ENCODE measurements at regions of chr19 and their contacts with region 1.

Region 1: GRCh38 chr19:11137542-11138384 is 17.8 kb downstream of the SPC24 start:
- DNase-seq: peak; percentile 95
- H3K4me3 Mint-ChIP-seq: peak overlapping the region; percentile 66
- H3K27ac Mint-ChIP-seq: peak overlapping the region; percentile 89
- H3K4me1 Mint-ChIP-seq: peaks cover 25% of the 10 kb centered on the region
- H3K27me3 Mint-ChIP-seq: no peaks in the 10 kb centered on the region
- CTCF ChIP-seq: peak; percentile 74

Region 2: GRCh38 chr19:11053817-11054195 is 84.0 kb before region 1 on chr19:
- CTCF ChIA-PET with region 1: no interaction called
- POLR2A ChIA-PET with region 1: no interaction called
- intact Hi-C with region 1: no loop called
- DNase-seq: no peak
- H3K4me3 Mint-ChIP-seq: no peak overlapping the region
- H3K27ac Mint-ChIP-seq: no peak overlapping the region
- H3K4me1 Mint-ChIP-seq: no peaks in the 10 kb centered on the region
- H3K27me3 Mint-ChIP-seq: no peaks in the 10 kb centered on the region
- CTCF ChIP-seq: no peak

Region 3: GRCh38 chr19:11064831-11065303 is 72.9 kb before region 1 on chr19:
- CTCF ChIA-PET with region 1: no interaction called
- POLR2A ChIA-PET with region 1: no interaction called
- intact Hi-C with region 1: no loop called
- DNase-seq: peak; percentile 58
- H3K4me3 Mint-ChIP-seq: no peak overlapping the region
- H3K27ac Mint-ChIP-seq: no peak overlapping the region
- H3K4me1 Mint-ChIP-seq: peaks cover 4% of the 10 kb centered on the region
- H3K27me3 Mint-ChIP-seq: no peaks in the 10 kb centered on the region
- CTCF ChIP-seq: no peak

Region 4: DNA sequence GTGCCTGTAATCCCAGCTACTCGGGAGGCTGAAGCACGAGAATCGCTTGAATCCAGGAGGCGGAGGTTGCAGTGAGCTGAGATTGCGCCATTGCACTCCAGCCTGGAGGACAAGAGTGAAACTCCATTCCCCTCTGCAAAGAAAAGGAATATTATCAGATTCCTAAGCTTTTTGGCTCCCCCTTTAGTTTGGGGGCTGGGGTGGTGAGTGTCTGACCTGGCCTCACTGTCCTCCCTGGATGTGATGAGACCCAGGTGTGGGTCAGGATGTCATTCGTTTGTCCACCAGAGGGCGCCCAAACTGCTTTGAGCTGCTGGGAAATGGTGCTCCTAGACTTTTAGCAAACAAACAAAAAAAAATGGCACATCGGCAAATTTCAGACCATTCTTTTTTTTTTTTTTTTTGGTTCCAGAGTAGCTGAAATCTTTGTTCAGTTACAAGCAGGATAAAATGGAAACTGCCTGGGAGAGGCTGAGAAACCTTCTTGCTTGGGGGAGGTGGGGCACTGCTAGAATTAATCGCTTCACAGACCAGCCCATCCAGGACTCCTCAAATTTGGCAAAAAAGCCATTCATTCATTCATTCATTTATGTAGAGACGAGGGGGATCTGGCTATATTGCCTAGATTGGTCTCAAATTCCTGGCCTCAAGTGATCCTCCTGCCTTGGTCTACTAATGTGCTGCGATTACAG is 11.6 kb before region 1 on chr19:
- CTCF ChIA-PET with region 1: interaction called, 22 read pairs
- POLR2A ChIA-PET with region 1: interaction called, 8 read pairs
- intact Hi-C with region 1: no loop called
- DNase-seq: peak; percentile 88
- H3K4me3 Mint-ChIP-seq: no peak overlapping the region
- H3K27ac Mint-ChIP-seq: no peak overlapping the region
- H3K4me1 Mint-ChIP-seq: no peaks in the 10 kb centered on the region
- H3K27me3 Mint-ChIP-seq: no peaks in the 10 kb centered on the region
- CTCF ChIP-seq: peak; percentile 71

Region 5: DNA sequence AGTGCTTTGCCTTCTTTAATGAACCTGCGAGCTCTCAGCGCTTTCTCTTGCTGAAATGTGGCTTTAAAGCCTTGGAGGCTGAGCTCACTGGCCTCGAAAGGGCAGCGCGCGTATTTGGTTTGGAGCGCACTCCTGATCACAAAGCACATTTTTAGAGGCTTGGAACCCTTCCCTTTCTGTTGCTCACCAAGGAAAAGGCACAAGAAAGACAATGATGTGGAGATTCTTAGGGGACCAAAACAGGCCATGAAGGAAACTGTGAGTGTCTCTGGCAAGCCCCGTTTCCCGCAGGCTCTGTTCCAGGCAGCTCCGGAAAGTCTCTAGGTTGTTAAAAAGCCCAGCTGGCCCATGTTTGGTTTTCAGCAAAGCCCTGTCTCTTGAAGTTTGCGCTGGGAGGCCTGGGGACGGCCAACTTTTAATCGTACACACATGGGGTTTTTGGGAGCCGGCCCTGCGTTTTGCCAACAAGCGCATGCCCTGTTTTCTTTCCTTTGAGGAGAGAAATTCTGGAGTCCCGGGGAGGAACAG is 27.2 kb after region 1 on chr19:
- CTCF ChIA-PET with region 1: interaction called, 5 read pairs
- POLR2A ChIA-PET with region 1: interaction called, 11 read pairs
- intact Hi-C with region 1: loop called (anchors 2 kb)
- DNase-seq: no peak
- H3K4me3 Mint-ChIP-seq: no peak overlapping the region
- H3K27ac Mint-ChIP-seq: no peak overlapping the region
- H3K4me1 Mint-ChIP-seq: peaks cover 12% of the 10 kb centered on the region
- H3K27me3 Mint-ChIP-seq: no peaks in the 10 kb centered on the region
- CTCF ChIP-seq: no peak

Region 6: DNA sequence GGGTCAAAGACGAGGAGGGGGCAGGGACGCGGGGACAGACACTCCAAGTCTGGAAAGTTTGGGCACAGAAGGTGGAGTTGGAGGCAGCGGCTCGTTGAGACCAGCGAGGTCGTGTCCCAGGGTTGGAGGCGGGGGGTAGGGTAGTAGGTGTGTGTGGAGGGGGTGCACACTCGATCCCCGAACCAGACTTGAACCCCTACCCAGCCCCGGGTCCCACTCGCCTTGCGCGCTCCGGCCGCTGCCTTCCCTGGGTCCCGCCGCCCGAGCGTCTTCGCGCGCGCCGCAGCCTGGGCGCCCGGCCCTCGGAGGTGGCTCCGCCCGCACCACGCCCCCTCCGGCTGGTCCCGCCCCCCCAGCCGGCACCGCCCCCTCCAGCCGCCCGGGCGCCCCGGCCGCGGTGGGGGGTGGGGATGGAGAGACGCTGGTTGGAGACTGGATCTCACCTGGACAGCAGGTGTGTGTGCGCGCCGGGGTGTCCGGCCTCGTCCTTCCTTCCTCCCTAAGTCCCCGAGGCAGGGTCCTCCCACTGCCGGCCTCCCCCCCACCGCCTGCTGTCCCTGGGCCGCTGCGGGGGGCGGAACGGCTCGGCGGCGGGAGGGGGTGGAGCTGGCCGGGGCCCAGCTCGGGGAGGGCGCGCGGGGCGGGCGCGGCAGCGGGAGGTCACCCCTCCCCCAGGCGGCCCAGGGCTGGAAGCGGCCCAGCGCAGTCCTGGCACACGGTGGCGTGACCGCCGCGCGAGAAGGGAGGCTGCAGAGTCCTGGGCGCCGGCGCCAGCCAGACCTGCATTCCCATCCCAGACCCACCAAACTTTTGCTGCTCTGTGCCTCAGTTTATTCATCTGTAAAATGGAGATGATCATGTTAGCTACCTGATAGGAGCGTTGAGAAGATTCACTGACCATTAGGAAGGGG is 59.8 kb after region 1 on chr19 and contains the start of gene KANK2:
- CTCF ChIA-PET with region 1: interaction called, 8 read pairs
- POLR2A ChIA-PET with region 1: interaction called, 15 read pairs
- intact Hi-C with region 1: no loop called
- DNase-seq: peak; percentile 84
- H3K4me3 Mint-ChIP-seq: peak within 1 kb of the TSS; percentile 84
- H3K27ac Mint-ChIP-seq: peak within 1 kb of the TSS; percentile 49
- H3K4me1 Mint-ChIP-seq: peaks cover 11% of the 10 kb centered on the region
- H3K27me3 Mint-ChIP-seq: no peaks in the 10 kb centered on the region
- CTCF ChIP-seq: no peak
- total RNA-seq, gene KANK2: 25.0 and 29.2 TPM in 2 replicates

Region 7: DNA sequence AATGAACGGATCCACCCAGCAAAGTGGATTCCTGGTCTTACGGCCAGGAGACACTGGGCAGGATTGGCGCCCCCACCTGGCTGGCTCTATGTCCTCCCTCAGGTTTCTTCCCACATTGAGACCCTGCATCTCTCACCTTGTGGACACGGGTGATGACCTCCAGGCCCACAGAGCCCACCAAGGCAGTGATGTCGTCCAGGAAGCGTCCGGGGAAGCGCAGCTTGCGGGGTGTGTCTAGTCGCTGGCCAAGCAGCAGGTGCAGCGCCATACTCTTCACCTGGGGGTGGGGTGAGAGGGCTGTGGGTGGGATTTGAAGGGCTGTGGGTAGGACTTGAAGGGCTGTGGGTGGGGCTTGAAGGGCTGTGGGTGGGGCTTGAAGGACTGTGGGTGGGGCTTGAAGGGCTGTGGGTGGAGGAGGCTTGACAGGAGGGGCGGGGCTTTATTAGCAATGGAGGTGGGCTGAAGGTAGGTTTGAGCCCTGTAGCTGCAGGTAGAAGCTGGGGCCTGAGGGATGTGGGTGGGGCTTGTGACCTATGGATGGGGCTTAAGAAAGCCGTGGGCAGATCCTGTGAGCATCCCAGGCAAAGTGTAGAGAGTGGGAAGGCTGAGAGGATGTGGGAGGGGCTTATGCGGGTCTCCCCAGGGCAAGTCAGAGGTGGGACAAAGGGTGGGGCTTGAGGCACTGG is 89.6 kb after region 1 on chr19:
- CTCF ChIA-PET with region 1: no interaction called
- POLR2A ChIA-PET with region 1: no interaction called
- intact Hi-C with region 1: no loop called
- DNase-seq: no peak
- H3K4me3 Mint-ChIP-seq: no peak overlapping the region
- H3K27ac Mint-ChIP-seq: no peak overlapping the region
- H3K4me1 Mint-ChIP-seq: no peaks in the 10 kb centered on the region
- H3K27me3 Mint-ChIP-seq: no peaks in the 10 kb centered on the region
- CTCF ChIP-seq: no peak

Region 8: DNA sequence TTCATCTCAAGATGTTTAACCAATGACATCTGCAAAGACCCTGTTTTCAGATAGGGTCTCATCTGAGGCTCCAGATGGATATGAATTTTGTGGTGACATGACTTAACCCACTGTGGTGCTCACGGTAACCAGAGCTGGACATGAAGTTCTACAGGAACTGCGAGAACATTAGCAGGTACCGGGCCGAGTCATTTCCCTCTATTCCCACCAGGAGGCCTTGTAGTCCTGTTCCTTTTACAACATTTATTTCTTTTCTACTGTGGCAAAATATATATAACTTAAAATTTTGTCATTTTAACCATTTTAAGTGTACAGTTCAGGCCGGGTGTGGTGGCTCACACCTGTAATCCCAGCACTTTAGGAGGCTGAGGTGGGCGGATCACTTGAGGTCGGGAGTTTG is 150.6 kb after region 1 on chr19:
- CTCF ChIA-PET with region 1: interaction called, 5 read pairs
- POLR2A ChIA-PET with region 1: no interaction called
- intact Hi-C with region 1: loop called (anchors 5 kb)
- DNase-seq: peak; percentile 35
- H3K4me3 Mint-ChIP-seq: no peak overlapping the region
- H3K27ac Mint-ChIP-seq: no peak overlapping the region
- H3K4me1 Mint-ChIP-seq: peaks cover 6% of the 10 kb centered on the region
- H3K27me3 Mint-ChIP-seq: no peaks in the 10 kb centered on the region
- CTCF ChIP-seq: peak; percentile 33

Region 9: DNA sequence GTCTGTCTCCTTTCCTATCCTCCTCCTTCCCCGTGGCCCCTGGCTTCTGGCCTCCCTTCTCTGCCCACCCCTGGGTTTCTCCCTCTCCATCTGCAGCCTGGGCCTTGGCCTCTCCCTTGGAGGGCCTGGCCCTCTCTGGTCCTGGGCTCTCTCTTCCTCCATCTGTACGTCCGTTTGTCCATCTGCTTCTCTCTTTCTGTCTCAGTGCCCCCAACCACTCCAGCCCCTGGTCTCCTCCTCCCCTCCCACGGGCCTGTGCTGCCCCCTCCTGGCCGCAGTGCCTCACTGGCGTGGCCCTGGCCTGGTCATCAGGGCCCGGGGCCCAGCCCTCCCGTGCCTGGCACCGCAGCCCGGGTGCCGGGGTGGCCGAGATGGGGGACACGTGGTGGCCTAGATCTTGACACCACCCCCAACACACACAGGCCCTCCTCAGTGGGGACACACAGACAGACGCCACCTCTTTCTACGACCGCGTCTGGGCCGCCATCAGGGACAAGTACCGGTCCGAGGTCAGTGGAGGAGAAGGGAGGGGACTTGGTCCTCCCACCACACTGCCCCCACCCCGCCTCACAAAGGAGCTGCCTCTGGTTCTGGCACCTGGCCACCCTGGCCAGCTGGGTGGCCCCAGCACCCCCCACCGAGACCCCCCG is 309.0 kb after region 1 on chr19:
- CTCF ChIA-PET with region 1: no interaction called
- POLR2A ChIA-PET with region 1: no interaction called
- intact Hi-C with region 1: loop called (anchors 10 kb)
- DNase-seq: peak; percentile 47
- H3K4me3 Mint-ChIP-seq: no peak overlapping the region
- H3K27ac Mint-ChIP-seq: peak overlapping the region; percentile 8
- H3K4me1 Mint-ChIP-seq: no peaks in the 10 kb centered on the region
- H3K27me3 Mint-ChIP-seq: no peaks in the 10 kb centered on the region
- CTCF ChIP-seq: peak; percentile 80